ENCODE measurements at regions of chr1 and their contacts with region 1.

Region 1: GRCh38 chr1:32266921-32267591 is 16.0 kb downstream of the LCK start:
- DNase-seq: peak in 3 of 5 donors; percentile 37 to 50 (median 48)
- H3K4me3 ChIP-seq: no peak overlapping the region
- H3K4me3 Mint-ChIP-seq: peak overlapping the region; percentile 74 to 92 (median 85)
- H3K27ac ChIP-seq: peak overlapping the region; percentile 42
- H3K27ac Mint-ChIP-seq: peak overlapping the region; percentile 82 to 99 (median 98)
- H3K4me1 ChIP-seq: peaks cover 82% of the 10 kb centered on the region
- H3K4me1 Mint-ChIP-seq: peaks cover 42 to 71% (median 54%) of the 10 kb centered on the region in 4 donors
- H3K27me3 ChIP-seq: no peaks in the 10 kb centered on the region
- H3K27me3 Mint-ChIP-seq: no peaks in the 10 kb centered on the region

Region 2: DNA sequence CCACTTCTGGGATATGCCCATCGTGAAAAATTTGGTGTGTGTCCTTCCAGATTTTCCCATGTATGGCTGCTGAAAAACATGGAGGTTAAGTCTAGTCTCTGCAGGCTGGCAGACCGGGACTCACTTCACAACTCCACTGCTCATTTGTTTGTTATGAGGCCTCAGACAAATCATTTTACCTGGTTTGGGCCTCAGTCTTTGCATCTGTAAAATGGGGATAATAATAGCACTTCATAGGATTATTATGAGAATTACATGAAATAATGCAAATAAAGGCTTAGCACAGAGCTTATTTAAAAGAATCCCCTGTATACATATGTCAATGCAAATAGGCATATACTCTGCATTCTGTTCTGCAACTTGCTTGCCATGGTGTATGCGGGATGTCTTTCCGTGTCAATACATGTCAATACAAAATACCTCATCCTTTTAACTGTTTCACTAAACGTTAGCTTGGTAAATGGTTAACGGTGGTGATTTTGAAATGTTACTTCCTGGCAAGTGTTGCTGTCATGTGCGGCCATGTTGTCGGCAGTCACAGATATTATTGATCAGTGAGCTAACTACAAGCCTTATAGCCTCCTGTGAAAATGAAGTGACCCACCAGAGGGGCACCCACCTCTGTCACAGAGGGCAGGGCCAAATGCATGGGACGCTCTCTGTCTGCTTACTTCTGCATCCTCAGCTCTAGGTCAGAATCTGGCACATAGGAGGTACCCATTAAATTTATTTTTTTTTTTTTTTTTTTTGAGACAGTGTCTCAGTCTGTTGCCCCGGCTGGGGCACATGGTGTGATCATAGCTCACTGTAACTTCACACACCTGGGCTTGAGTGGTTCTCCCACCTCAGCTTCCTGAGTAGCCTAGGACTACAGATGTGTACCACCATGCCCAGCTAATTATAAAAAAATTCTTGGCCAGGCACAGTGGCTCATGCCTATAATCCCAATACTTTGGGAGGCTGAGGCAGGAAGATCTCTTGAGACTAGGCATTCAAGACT is 11.7 kb before region 1 on chr1:
- CTCF ChIA-PET with region 1: interaction called, 90 read pairs
- POLR2A ChIA-PET with region 1: interaction called, 819 read pairs
- intact Hi-C with region 1: no loop called
- DNase-seq: peak in 3 of 5 donors; percentile 38 to 49 (median 46)
- H3K4me3 ChIP-seq: peak overlapping the region; percentile 15 to 95
- H3K4me3 Mint-ChIP-seq: peak overlapping the region; percentile 86 to 100 (median 92)
- H3K27ac ChIP-seq: peak overlapping the region; percentile 58
- H3K27ac Mint-ChIP-seq: peak overlapping the region; percentile 71 to 94 (median 91)
- H3K4me1 ChIP-seq: peaks cover 50% of the 10 kb centered on the region
- H3K4me1 Mint-ChIP-seq: peaks cover 30 to 77% (median 44%) of the 10 kb centered on the region in 4 donors
- H3K27me3 ChIP-seq: no peaks in the 10 kb centered on the region
- H3K27me3 Mint-ChIP-seq: no peaks in the 10 kb centered on the region

Measured in CD4-positive, alpha-beta memory T cell (primary cell).